ENCODE measurements at regions of chr9 and their contacts with region 1.

Region 1: GRCh38 chr9:131762356-131762932 is 22.6 kb upstream of the RAPGEF1 start:
- DNase-seq: peak; percentile 80 to 93
- ATAC-seq: peak; percentile 93
- H3K4me3 ChIP-seq: no peak overlapping the region
- H3K27ac ChIP-seq: no peak overlapping the region
- H3K4me1 ChIP-seq: no peaks in the 10 kb centered on the region
- H3K27me3 ChIP-seq: no peaks in the 10 kb centered on the region

Region 2: GRCh38 chr9:132250324-132251262 is 488.1 kb after region 1 on chr9:
- intact Hi-C with region 1: loop called (anchors 5 kb)
- DNase-seq: no peak
- ATAC-seq: peak; percentile 33
- H3K4me3 ChIP-seq: no peak overlapping the region
- H3K27ac ChIP-seq: no peak overlapping the region
- H3K4me1 ChIP-seq: no peaks in the 10 kb centered on the region
- H3K27me3 ChIP-seq: no peaks in the 10 kb centered on the region

Region 3: DNA sequence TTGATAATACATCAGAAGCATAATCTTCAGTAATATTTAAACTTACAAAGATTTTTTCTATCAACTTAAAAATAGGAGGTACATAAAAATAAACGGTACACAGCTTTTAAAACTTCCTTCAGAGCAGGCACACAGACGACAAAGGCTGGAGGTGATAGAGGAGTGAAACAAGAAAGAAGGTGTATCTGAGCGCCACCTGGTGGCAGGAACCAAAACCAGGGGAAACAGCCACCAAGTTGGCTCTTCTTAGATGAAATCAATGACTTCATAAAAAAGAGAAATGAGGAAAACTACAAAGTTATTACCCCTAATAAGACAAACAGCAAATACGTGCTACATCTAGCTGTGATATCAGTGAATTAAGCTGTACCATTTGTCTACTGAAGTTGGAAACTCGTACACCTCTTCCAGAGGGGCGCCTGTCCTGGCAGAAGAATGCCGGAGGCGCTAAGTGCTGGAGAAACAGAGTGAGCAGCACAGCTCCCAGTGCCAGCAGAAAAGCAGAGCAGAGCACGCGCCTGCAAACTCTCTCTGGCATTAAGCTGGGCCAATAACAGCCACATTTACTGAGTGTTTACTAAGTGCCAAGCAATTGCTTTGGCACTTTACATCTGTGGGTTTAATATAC is 506.4 kb after region 1 on chr9:
- intact Hi-C with region 1: loop called in 1 of 2 experiments (anchors 5 kb)
- DNase-seq: peak; percentile 71 to 86
- ATAC-seq: no peak
- H3K4me3 ChIP-seq: no peak overlapping the region
- H3K27ac ChIP-seq: no peak overlapping the region
- H3K4me1 ChIP-seq: no peaks in the 10 kb centered on the region
- H3K27me3 ChIP-seq: no peaks in the 10 kb centered on the region